AG04450 (cell line): ENCODE measurements at regions of chr3 and their contacts with region 1.

Region 1: DNA sequence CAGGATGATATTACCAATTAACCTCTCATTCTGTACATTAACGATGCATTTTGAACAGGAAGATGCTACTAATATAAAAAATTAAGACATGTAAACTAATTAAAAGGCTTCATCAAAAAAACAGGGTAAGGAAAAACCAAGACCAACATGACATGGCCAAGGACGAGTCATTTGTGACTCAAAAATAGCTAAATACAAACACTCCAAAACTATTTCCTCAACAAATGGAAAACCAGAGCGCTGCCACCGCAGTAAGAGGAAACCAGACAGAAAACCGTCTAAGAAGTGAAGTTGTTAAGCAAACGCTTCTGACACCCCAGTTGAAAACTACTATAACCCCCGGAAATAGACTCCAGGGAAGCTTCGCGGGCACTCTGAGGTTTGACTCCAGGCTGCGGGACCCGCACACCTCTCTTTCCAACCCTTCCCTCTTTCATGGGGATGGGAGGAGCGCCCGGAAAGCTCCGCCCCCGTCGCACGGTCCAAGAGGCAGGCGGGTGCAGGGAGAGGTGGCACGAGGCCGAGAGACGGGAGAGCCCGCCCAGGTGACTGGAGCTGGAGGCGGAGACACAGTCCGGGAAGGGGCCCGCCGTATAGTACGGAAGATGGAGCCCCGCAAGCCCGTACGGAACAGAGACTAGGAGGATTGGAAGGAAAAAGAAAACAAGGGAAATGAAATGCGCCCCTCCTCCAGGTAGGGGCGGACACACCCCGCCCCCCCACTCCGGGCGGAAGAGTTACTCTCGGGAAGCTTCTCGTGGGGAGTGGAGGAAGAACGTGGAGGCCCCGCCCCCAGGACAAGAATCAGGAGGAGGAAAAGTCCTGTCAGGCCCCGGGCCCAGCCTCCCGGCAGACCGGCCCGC is 708 bp downstream of the DCAF1 start:
- DNase-seq: peak; percentile 81
- H3K4me3 ChIP-seq: peak overlapping the region; percentile 78
- H3K27ac ChIP-seq: peak overlapping the region; percentile 88
- H3K27me3 ChIP-seq: no peaks in the 10 kb centered on the region
- CTCF ChIP-seq: no peak

Region 2: GRCh38 chr3:51391075-51391567 is 108.0 kb before region 1 on chr3 and contains the start of gene RBM15B:
- CTCF ChIA-PET with region 1: interaction called, 29 read pairs
- POLR2A ChIA-PET with region 1: interaction called, 3 read pairs
- DNase-seq: peak; percentile 89
- H3K4me3 ChIP-seq: peak within 1 kb of the TSS; percentile 72
- H3K27ac ChIP-seq: peak within 1 kb of the TSS; percentile 43
- H3K27me3 ChIP-seq: no peaks in the 10 kb centered on the region
- CTCF ChIP-seq: no peak; the same call in 1 of the 2 replicates
- polyA plus RNA-seq, gene RBM15B: 12.5 and 17.0 TPM in 2 replicates

Region 3: DNA sequence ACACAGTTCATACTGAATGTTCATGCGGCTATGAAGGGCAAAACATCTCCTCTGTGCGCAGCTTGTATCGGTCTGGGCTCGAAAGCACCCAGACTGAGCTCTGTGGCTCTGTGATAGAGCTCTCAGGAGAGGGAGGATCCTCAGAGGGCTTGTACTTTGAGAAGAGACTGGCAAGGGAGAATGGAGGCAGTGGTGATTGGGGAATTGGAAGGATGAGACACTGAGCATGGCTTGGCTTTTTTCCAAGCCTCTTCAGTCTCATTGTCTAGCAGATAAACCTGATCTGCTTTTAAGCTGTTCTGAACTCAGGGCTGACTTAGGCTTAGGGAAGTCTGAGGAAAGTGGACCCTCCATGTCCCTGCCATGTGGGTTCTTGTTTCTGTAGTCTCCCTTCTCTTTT is 82.4 kb after region 1 on chr3:
- CTCF ChIA-PET with region 1: interaction called, 11 read pairs
- POLR2A ChIA-PET with region 1: interaction called, 15 read pairs
- DNase-seq: no peak
- H3K4me3 ChIP-seq: no peak overlapping the region
- H3K27ac ChIP-seq: peak overlapping the region; percentile 68
- H3K27me3 ChIP-seq: no peaks in the 10 kb centered on the region
- CTCF ChIP-seq: no peak

Region 4: GRCh38 chr3:51637941-51638471 is 138.9 kb after region 1 on chr3:
- CTCF ChIA-PET with region 1: interaction called, 97 read pairs
- POLR2A ChIA-PET with region 1: no interaction called
- DNase-seq: peak; percentile 39
- H3K4me3 ChIP-seq: no peak overlapping the region
- H3K27ac ChIP-seq: peak overlapping the region; percentile 21
- H3K27me3 ChIP-seq: no peaks in the 10 kb centered on the region
- CTCF ChIP-seq: peak; percentile 94

Region 5: DNA sequence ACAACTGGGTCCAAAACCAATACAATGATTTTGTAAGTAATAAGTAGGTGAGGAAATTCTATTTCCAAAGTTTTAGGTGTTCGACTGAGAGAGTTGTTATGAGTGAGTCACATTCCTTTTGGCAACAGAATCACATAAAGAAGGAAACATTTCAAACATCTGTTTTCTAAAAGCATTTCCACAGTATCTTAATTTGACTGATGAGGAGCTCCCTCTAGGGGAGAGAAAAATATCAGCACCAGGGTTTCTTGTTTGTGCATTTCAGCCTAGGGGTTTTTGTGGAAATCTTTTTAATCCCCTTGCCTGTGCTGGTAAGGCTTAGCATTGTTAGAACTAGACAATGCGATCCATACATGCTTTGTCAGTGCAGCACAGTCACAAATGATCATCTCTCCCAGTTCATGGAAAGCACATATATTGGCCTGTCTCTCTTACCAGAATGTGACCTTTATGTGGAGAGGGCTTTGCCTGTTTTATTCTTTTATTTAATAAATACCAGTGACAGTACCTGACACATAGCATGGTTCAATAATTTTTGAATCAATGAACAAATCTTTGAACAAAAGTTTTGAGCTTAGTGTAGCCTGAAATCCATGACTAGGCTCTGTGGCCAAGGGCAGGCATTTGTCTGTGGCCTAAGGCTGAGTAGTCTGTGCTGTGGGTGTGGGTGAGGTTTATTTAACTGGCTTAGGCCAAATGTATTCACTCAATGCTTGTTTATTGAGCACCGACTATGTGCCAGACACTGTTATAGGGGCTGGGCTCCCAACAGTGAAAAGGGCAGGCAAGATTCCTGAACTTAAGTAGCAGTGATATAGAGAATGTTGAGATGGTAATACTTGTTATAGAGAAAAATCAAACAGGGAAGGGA is 301.0 kb after region 1 on chr3:
- CTCF ChIA-PET with region 1: interaction called, 13 read pairs
- POLR2A ChIA-PET with region 1: no interaction called
- DNase-seq: peak; percentile 48
- H3K4me3 ChIP-seq: no peak overlapping the region
- H3K27ac ChIP-seq: no peak overlapping the region
- H3K27me3 ChIP-seq: peaks cover 10% of the 10 kb centered on the region
- CTCF ChIP-seq: peak; percentile 83